Mammary epithelial cell (primary cell): ENCODE measurements at regions of chr3 and their contacts with region 1.

Region 1: DNA sequence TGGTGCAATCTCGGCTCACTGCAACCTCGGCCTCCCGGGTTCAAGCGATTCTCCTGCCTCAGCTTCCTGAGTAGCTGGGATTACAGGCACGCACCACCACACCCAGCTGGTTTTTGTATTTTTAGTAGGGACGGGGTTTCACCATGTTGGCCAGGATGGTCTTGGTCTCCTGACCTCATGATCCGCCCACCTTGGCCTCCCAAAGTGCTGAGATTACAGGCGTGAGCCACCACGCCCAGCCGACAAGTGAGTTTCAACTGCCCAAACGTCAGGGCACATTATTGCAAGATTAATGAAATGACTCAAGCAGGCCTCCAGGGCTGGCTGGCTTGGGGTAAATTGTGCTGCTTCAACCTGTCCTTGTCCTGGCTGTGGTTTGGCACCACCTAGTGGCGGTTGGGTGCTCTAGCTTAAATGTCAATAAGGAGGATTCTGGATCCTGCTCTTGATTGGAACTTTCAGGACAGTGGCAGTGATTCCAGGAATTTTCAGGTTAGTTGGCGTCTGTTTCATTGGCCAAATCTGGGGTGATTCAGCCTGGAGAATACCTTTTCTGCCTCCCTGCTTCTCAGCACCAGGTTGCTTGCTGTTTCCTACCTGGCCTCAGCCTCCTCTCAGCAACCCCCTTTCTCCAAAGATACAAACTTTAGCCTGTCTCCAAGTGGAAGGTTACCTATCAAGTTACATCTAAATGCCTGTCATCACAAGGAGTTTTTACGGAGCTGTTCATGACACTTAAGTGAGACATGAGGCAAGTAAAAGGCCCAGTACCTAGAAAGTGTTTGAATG is 32.4 kb upstream of the SACM1L start:
- DNase-seq: peak; percentile 91
- H3K4me3 ChIP-seq: no peak overlapping the region
- H3K27ac ChIP-seq: no peak overlapping the region
- H3K4me1 ChIP-seq: peaks cover 9% of the 10 kb centered on the region
- H3K27me3 ChIP-seq: no peaks in the 10 kb centered on the region
- CTCF ChIP-seq: peak; percentile 90 to 97

Region 2: GRCh38 chr3:45507820-45508317 is 148.9 kb before region 1 on chr3:
- CTCF ChIA-PET with region 1: interaction called, 5 read pairs
- dilution Hi-C with region 1: no loop called
- in situ Hi-C with region 1: loop called in 1 of 2 experiments (anchors 5 kb)
- intact Hi-C with region 1: loop called (anchors 1 kb)
- DNase-seq: no peak
- H3K4me3 ChIP-seq: no peak overlapping the region
- H3K27ac ChIP-seq: no peak overlapping the region
- H3K4me1 ChIP-seq: peaks cover 10% of the 10 kb centered on the region
- H3K27me3 ChIP-seq: no peaks in the 10 kb centered on the region
- CTCF ChIP-seq: no peak

Region 3: DNA sequence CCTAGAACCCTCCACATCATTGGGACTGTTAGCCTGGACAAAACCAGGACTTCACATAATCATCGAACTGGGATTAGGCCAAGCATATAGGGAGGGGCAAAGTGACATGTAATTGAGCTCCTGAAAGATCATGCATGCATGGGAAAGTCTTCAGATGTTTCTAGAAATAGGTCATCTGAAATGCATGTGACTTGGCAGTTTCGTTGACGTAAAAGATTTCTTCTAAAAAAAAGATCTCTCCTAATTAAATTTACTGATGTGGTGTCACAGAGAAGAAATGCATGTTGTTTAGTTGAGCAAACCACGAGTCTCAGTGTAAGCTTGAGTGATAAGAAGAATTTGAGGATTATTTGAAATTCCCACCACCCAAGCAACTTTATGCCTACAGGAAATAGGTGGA is 132.2 kb before region 1 on chr3:
- CTCF ChIA-PET with region 1: no interaction called
- dilution Hi-C with region 1: loop called (anchors 5 kb)
- in situ Hi-C with region 1: loop called in 1 of 2 experiments (anchors 5 kb)
- intact Hi-C with region 1: no loop called
- DNase-seq: no peak
- H3K4me3 ChIP-seq: no peak overlapping the region
- H3K27ac ChIP-seq: no peak overlapping the region
- H3K4me1 ChIP-seq: peaks cover 9% of the 10 kb centered on the region
- H3K27me3 ChIP-seq: no peaks in the 10 kb centered on the region
- CTCF ChIP-seq: no peak

Region 4: GRCh38 chr3:45585371-45585770 is 71.4 kb before region 1 on chr3:
- CTCF ChIA-PET with region 1: no interaction called
- dilution Hi-C with region 1: loop called (anchors 5 kb)
- in situ Hi-C with region 1: loop called (anchors 5 to 10 kb)
- intact Hi-C with region 1: no loop called
- DNase-seq: no peak
- H3K4me3 ChIP-seq: no peak overlapping the region
- H3K27ac ChIP-seq: no peak overlapping the region
- H3K4me1 ChIP-seq: peaks cover 5% of the 10 kb centered on the region
- H3K27me3 ChIP-seq: no peaks in the 10 kb centered on the region
- CTCF ChIP-seq: no peak

Region 5: DNA sequence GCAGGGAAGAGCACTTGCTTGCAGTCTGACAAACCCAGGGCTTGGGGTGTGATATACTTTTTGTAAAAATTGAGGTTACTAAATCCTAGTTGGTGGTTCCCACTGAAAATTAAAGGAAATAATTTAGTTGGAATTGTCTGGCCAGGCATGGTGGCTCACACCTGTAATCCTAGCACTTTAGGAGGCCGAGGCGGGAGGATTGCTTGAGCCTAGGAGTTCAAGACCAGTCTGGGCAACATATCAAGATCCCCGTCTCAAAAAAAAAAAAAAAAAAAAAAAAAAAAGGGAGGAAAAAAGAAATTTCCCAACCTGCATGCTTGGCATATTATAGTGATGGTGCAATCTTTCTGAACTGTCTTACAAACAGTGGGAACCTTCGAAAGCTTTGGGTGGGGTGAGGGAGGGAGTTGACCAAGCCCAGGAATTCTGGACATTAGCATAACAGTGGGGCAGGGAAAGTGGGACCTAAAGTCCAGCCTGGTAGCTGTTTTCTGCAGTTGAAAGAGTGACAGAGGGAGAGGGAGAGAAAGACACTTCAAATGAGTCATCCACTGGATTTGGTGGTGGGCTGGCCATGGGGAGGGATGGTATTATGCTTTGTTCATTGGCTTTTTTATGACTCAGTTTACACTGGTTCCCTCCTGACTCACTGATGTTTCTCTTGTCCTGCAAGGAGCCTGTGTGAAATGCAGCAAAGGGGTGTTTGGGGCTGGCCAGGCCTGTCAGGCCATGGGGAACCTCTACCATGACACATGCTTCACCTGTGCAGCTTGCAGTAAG is 21.1 kb before region 1 on chr3:
- CTCF ChIA-PET with region 1: no interaction called
- dilution Hi-C with region 1: no loop called
- in situ Hi-C with region 1: no loop called
- intact Hi-C with region 1: loop called (anchors 1 kb)
- DNase-seq: peak; percentile 76
- H3K4me3 ChIP-seq: no peak overlapping the region
- H3K27ac ChIP-seq: no peak overlapping the region
- H3K4me1 ChIP-seq: peaks cover 14% of the 10 kb centered on the region
- H3K27me3 ChIP-seq: no peaks in the 10 kb centered on the region
- CTCF ChIP-seq: no peak

Region 6: GRCh38 chr3:45688882-45689756 is 32.4 kb after region 1 on chr3 and contains the start of gene SACM1L:
- CTCF ChIA-PET with region 1: interaction called, 56 read pairs
- dilution Hi-C with region 1: no loop called
- in situ Hi-C with region 1: no loop called
- intact Hi-C with region 1: no loop called
- DNase-seq: peak; percentile 99
- H3K4me3 ChIP-seq: peak within 1 kb of the TSS; percentile 53 to 95 (median 87)
- H3K27ac ChIP-seq: peak within 1 kb of the TSS; percentile 72
- H3K4me1 ChIP-seq: peaks cover 23% of the 10 kb centered on the region
- H3K27me3 ChIP-seq: no peaks in the 10 kb centered on the region
- CTCF ChIP-seq: no peak
- total RNA-seq, gene SACM1L: 27.8 to 39.3 TPM